Naive thymus-derived CD4-positive, alpha-beta T cell (primary cell): ENCODE measurements at regions of chr1 and their contacts with region 1.

Region 1: GRCh38 chr1:221741711-221742554 is at the start of gene DUSP10:
- DNase-seq: peak; percentile 88 to 100 (median 99)
- ATAC-seq: peak; percentile 91
- H3K4me3 ChIP-seq: peak within 1 kb of the TSS; percentile 85
- H3K4me3 Mint-ChIP-seq: peak within 1 kb of the TSS in 1 of 10 donors; percentile 33
- H3K27ac ChIP-seq: peak within 1 kb of the TSS; percentile 94
- H3K27ac Mint-ChIP-seq: peak within 1 kb of the TSS in 3 of 9 donors; percentile 39 to 83 (median 50)
- H3K4me1 ChIP-seq: peaks cover 9 to 17% of the 10 kb centered on the region in 2 donors
- H3K4me1 Mint-ChIP-seq: peaks cover 0 to 32% (median 21%) of the 10 kb centered on the region in 7 donors
- H3K27me3 ChIP-seq: no peaks in the 10 kb centered on the region
- H3K27me3 Mint-ChIP-seq: no peaks in the 10 kb centered on the region
- total RNA-seq, gene DUSP10: 2.5 to 60.6 (median 19.0) TPM

Region 2: GRCh38 chr1:220272047-220272840 is 1469.7 kb before region 1 on chr1 and contains the start of gene RAB3GAP2:
- CTCF ChIA-PET with region 1: no interaction called
- POLR2A ChIA-PET with region 1: no interaction called
- intact Hi-C with region 1: loop called in 1 of 2 experiments (anchors 5 kb)
- DNase-seq: peak; percentile 95 to 98 (median 97)
- ATAC-seq: peak; percentile 96
- H3K4me3 ChIP-seq: peak within 1 kb of the TSS; percentile 95
- H3K4me3 Mint-ChIP-seq: no peak within 1 kb of the TSS
- H3K27ac ChIP-seq: peak within 1 kb of the TSS; percentile 98
- H3K27ac Mint-ChIP-seq: no peak within 1 kb of the TSS
- H3K4me1 ChIP-seq: peaks cover 21 to 24% of the 10 kb centered on the region in 2 donors
- H3K4me1 Mint-ChIP-seq: peaks cover 7 to 19% (median 16%) of the 10 kb centered on the region in 7 donors
- H3K27me3 ChIP-seq: no peaks in the 10 kb centered on the region
- H3K27me3 Mint-ChIP-seq: peaks cover 0 to 16% (median 3%) of the 10 kb centered on the region in 5 donors
- total RNA-seq, gene RAB3GAP2: 36.8 to 53.0 (median 46.4) TPM

Region 3: GRCh38 chr1:221708987-221709386 is 32.9 kb before region 1 on chr1:
- CTCF ChIA-PET with region 1: interaction called, 7 read pairs
- POLR2A ChIA-PET with region 1: interaction called, 82 read pairs
- intact Hi-C with region 1: loop called (anchors 1 kb)
- DNase-seq: peak in 6 of 9 donors; percentile 27 to 86 (median 53)
- ATAC-seq: peak; percentile 63
- H3K4me3 ChIP-seq: no peak overlapping the region
- H3K4me3 Mint-ChIP-seq: peak overlapping the region in 3 of 10 donors; percentile 6 to 20 (median 15)
- H3K27ac ChIP-seq: no peak overlapping the region
- H3K27ac Mint-ChIP-seq: peak overlapping the region; percentile 14 to 81 (median 68)
- H3K4me1 ChIP-seq: peaks cover 20 to 58% of the 10 kb centered on the region in 2 donors
- H3K4me1 Mint-ChIP-seq: peaks cover 30 to 72% (median 57%) of the 10 kb centered on the region in 7 donors
- H3K27me3 ChIP-seq: no peaks in the 10 kb centered on the region
- H3K27me3 Mint-ChIP-seq: no peaks in the 10 kb centered on the region

Region 4: DNA sequence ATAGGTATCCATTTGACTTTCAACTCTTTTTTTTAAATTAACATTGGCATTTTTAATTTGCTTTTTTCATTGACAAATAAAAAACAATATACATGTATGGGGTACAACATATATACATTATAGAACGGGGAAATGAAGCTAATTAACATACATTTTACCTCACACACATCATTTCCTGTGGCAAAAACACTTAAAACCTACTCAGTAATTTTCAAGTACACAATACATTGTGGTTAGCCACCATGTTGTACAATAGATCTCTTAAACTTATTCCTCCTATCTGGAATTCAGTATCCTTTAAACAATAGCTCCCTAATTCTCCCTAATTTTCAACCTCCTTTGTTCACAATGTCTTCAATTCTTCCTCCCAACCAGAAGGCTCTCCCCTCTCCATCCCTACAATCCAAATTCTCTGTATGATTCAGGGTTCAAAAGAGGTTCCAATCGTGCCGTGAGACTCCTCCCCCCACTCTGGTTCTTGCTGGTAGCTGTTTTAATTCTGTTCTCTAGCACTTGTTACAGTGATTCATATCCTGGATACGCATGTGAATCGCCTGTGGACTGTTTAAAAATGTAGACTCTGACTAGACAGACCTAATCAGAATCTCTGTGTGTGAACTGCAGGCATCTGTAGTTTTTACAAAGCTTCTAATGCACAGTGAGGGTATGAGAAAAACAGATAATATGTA is 87.5 kb after region 1 on chr1:
- CTCF ChIA-PET with region 1: no interaction called
- POLR2A ChIA-PET with region 1: no interaction called
- intact Hi-C with region 1: loop called in 1 of 2 experiments (anchors 1 kb)
- DNase-seq: peak in 1 of 9 donors; percentile 42
- ATAC-seq: peak; percentile 88
- H3K4me3 ChIP-seq: peak overlapping the region; percentile 16
- H3K4me3 Mint-ChIP-seq: peak overlapping the region in 4 of 10 donors; percentile 3 to 74 (median 44)
- H3K27ac ChIP-seq: no peak overlapping the region
- H3K27ac Mint-ChIP-seq: peak overlapping the region in 3 of 9 donors; percentile 61 to 95 (median 68)
- H3K4me1 ChIP-seq: peaks cover 15 to 36% of the 10 kb centered on the region in 2 donors
- H3K4me1 Mint-ChIP-seq: peaks cover 13 to 79% (median 29%) of the 10 kb centered on the region in 7 donors
- H3K27me3 ChIP-seq: no peaks in the 10 kb centered on the region
- H3K27me3 Mint-ChIP-seq: no peaks in the 10 kb centered on the region

Region 5: DNA sequence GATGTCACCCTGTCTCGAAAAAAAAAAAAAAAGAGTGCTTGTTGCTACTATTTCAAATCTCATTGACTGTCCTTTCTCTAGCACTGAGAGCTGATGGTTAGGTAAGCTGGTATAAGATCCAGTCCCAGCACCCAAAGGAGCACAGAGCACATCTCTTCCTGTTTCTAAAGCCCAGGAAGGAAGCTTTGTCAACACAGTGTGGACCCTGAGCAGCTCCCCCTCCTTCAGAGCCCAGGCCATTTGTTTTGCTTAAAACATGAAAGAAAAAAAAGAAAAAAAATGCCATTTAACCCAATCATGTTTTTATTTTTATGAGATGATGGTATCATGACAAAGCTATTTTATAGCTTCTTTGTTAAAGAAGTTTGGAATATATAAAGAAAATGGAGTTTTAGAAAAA is 184.0 kb after region 1 on chr1:
- CTCF ChIA-PET with region 1: no interaction called
- POLR2A ChIA-PET with region 1: no interaction called
- intact Hi-C with region 1: no loop called
- DNase-seq: no peak
- ATAC-seq: no peak
- H3K4me3 ChIP-seq: no peak overlapping the region
- H3K4me3 Mint-ChIP-seq: no peak overlapping the region
- H3K27ac ChIP-seq: no peak overlapping the region
- H3K27ac Mint-ChIP-seq: no peak overlapping the region
- H3K4me1 ChIP-seq: no peaks in the 10 kb centered on the region
- H3K4me1 Mint-ChIP-seq: no peaks in the 10 kb centered on the region
- H3K27me3 ChIP-seq: no peaks in the 10 kb centered on the region
- H3K27me3 Mint-ChIP-seq: peaks cover 0 to 13% (median 9%) of the 10 kb centered on the region in 5 donors

Region 6: DNA sequence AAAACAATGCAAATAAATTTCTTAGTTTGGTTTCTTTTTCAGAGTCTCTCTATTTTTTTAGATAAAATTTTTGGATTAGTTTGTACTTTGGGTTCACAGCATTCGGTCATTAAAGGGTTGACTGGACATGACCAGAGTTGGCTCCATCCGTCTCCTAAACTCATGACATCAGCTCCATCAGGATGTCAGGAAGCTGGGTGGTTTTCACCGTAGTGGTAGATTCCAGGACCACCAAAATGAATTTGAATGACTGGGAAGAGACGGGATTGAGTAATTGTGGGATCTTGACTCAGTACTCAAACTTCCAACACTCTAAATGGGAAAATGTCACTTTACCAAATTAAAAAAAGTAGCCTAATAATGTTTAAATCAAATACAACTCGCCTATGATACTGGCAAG is 279.2 kb after region 1 on chr1:
- CTCF ChIA-PET with region 1: no interaction called
- POLR2A ChIA-PET with region 1: no interaction called
- intact Hi-C with region 1: no loop called
- DNase-seq: no peak
- ATAC-seq: no peak
- H3K4me3 ChIP-seq: no peak overlapping the region
- H3K4me3 Mint-ChIP-seq: no peak overlapping the region
- H3K27ac ChIP-seq: no peak overlapping the region
- H3K27ac Mint-ChIP-seq: no peak overlapping the region
- H3K4me1 ChIP-seq: no peaks in the 10 kb centered on the region
- H3K4me1 Mint-ChIP-seq: peaks cover 0 to 4% (median 0%) of the 10 kb centered on the region in 7 donors
- H3K27me3 ChIP-seq: no peaks in the 10 kb centered on the region
- H3K27me3 Mint-ChIP-seq: peaks cover 0 to 10% (median 5%) of the 10 kb centered on the region in 5 donors

Region 7: DNA sequence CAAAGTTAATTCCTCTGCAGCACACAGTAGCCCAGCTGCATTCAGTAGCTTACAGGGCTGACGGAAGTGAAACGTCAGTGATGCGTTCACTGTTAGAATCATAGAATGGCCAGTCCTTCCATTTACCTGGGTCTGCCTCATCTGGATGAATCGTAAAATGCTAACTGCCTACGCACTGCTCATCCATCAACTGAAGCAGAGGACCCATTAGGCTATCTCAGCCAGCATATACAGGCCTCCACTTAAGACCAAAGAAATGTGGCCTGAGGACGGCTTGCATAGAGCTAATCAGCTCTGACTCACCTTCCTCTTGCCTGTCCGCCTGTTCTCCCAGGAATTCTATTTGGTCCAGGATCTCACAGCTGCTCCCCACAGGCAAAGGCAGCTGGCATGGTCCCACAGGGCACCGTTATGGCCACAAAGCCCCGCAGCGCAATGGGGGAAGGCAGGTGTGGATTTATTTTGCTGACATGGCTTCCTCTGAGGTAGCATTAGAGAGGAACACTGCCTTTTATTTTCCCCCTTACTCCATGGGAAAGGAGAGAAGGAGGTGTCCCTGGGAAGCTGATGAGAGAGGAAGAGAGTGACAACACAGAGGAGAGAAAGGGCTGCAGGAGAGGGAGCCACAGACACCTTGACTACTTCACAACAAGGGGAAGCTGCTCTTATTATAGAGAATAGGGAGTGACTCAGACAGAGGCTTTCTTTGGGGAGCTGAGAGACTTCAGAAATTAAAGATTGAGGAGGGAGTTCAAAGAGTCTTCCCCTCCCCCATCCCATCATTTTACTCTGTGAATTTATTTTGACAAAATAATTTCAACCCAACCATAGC is 628.4 kb after region 1 on chr1:
- CTCF ChIA-PET with region 1: no interaction called
- POLR2A ChIA-PET with region 1: no interaction called
- intact Hi-C with region 1: no loop called
- DNase-seq: no peak
- ATAC-seq: no peak
- H3K4me3 ChIP-seq: no peak overlapping the region
- H3K4me3 Mint-ChIP-seq: no peak overlapping the region
- H3K27ac ChIP-seq: no peak overlapping the region
- H3K27ac Mint-ChIP-seq: peak overlapping the region in 1 of 9 donors; percentile 70
- H3K4me1 ChIP-seq: no peaks in the 10 kb centered on the region
- H3K4me1 Mint-ChIP-seq: peaks cover 0 to 14% (median 5%) of the 10 kb centered on the region in 7 donors
- H3K27me3 ChIP-seq: no peaks in the 10 kb centered on the region
- H3K27me3 Mint-ChIP-seq: no peaks in the 10 kb centered on the region

Region 8: DNA sequence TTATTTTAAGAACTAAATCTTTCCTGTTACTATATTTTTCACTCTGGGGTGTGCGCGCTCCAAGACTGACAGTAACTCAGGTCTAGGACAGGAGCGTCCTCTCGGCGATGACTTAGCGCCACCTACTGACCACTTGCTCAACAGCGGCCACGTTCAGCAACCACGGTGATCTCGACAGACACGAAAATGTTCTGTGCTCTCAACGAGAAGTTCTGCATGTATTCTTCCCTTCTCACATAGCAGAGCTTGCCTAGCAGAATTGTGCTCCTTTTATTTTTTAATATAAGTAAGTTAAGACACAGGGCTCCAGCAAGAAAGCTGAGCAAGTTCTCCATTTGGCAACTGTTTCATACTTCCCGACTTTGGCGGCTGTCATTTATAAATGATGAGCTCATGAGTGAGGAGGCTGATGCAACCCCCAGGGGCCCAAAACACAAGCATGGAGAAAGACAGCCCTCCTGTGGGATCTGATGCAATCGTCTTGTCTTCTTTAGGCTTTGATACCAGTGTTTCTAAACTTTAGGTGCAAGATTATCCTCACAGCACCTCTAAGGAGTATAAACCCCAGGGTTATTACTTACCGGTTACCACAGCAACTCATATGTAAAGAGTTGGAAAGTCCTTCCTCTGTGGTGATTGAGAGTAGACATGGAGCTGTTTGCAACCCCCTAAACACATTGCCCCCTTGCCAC is 713.4 kb after region 1 on chr1:
- CTCF ChIA-PET with region 1: interaction called, 6 read pairs
- POLR2A ChIA-PET with region 1: interaction called, 7 read pairs
- intact Hi-C with region 1: loop called (anchors 1 to 2 kb)
- DNase-seq: peak; percentile 58 to 88 (median 82)
- ATAC-seq: peak; percentile 97
- H3K4me3 ChIP-seq: no peak overlapping the region
- H3K4me3 Mint-ChIP-seq: peak overlapping the region in 9 of 10 donors; percentile 0 to 75 (median 58)
- H3K27ac ChIP-seq: no peak overlapping the region
- H3K27ac Mint-ChIP-seq: peak overlapping the region; percentile 26 to 84 (median 65)
- H3K4me1 ChIP-seq: peaks cover 8 to 9% of the 10 kb centered on the region in 2 donors
- H3K4me1 Mint-ChIP-seq: peaks cover 8 to 31% (median 15%) of the 10 kb centered on the region in 7 donors
- H3K27me3 ChIP-seq: no peaks in the 10 kb centered on the region
- H3K27me3 Mint-ChIP-seq: peaks cover 0 to 4% (median 0%) of the 10 kb centered on the region in 5 donors

Region 9: DNA sequence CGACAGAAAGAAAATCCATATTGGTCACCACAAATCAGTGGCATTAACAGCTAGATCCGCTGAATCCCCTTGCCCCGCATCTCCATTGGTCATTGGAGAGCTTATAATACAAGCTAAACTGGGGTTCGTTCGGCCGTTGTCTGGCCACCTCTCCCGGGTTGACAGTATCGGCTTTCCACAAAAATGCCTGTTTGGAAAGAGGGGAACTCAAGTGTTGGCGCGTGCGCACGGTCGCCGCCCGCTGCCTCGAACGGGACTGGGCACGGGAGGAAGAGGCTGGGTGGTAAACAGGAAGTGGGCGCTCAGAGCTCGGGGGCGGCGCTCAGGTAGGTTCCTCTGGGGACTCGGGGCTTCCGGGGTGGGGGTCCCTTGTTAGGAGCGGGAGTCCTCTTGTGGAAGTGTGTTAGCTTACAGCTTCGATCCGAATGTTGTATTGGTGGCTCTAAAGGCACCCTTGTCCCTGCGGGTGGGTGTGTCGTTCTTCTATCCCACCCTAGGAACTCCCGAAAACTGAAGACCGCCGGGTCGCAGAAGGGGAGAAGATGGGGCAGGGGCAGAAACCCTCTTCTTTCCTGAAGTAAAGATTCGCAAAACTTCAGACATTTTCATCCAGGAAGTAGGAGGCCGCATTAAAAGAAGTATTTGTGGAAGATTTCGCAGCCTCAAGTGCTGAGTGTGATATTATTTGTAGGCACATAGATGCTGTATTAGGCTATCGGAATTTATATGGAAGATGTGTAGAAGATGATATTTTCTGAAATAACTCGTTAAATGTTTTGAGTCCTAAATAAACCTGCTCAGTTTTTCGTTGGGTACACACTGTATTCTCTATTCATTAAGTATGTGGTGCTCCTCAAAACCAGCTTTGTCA is 971.4 kb after region 1 on chr1:
- CTCF ChIA-PET with region 1: no interaction called
- POLR2A ChIA-PET with region 1: interaction called, 10 read pairs
- intact Hi-C with region 1: loop called in 1 of 2 experiments (anchors 1 kb)
- DNase-seq: peak; percentile 76 to 95 (median 93)
- ATAC-seq: peak; percentile 80
- H3K4me3 ChIP-seq: peak overlapping the region; percentile 99
- H3K4me3 Mint-ChIP-seq: peak overlapping the region; percentile 92 to 100 (median 99)
- H3K27ac ChIP-seq: peak overlapping the region; percentile 100
- H3K27ac Mint-ChIP-seq: peak overlapping the region; percentile 97 to 100 (median 99)
- H3K4me1 ChIP-seq: peaks cover 11 to 21% of the 10 kb centered on the region in 2 donors
- H3K4me1 Mint-ChIP-seq: peaks cover 37 to 69% (median 60%) of the 10 kb centered on the region in 7 donors
- H3K27me3 ChIP-seq: no peaks in the 10 kb centered on the region
- H3K27me3 Mint-ChIP-seq: peaks cover 0 to 2% (median 0%) of the 10 kb centered on the region in 5 donors